ENCODE measurements at regions of chr1 and their contacts with region 1.

Region 1: GRCh38 chr1:2308844-2309243 is 80.7 kb downstream of the SKI start:
- DNase-seq: no peak
- ATAC-seq: no peak
- H3K4me3 ChIP-seq: no peak overlapping the region
- H3K27ac ChIP-seq: no peak overlapping the region
- H3K4me1 ChIP-seq: peaks cover 10% of the 10 kb centered on the region; the same call in 1 of the 2 replicates
- H3K27me3 ChIP-seq: no peaks in the 10 kb centered on the region
- CTCF ChIP-seq: no peak
- EP300 ChIP-seq: no peak
- POLR2A ChIP-seq: no peak
- RAD21 ChIP-seq: no peak

Region 2: DNA sequence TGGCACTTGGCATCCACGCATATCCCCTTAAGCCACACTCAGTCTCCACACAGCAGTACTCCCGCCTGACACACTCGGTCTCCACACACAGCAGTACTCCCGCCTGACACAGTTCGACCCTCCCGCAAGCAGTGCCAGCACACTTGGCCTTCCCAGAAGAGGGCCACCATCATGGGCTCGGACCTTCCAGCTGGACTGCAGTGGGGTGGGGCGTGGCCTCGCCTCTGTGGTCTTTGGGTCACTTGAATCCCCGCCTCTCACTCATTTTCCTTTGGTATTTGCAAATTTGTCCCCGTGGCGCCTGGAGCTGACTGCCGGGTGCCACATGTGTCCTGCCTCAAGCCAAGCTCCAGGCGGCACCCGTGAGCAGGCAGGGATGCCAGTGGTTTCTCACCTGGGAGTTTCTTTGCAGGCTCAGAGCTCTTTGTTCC is 178.0 kb before region 1 on chr1:
- CTCF ChIA-PET with region 1: no interaction called
- POLR2A ChIA-PET with region 1: interaction called, 10 read pairs
- RAD21 ChIA-PET with region 1: no interaction called
- SMC1A ChIA-PET with region 1: no interaction called
- in situ Hi-C with region 1: no loop called
- intact Hi-C with region 1: no loop called
- DNase-seq: no peak
- ATAC-seq: no peak
- H3K4me3 ChIP-seq: no peak overlapping the region
- H3K27ac ChIP-seq: no peak overlapping the region
- H3K4me1 ChIP-seq: peaks cover 11% of the 10 kb centered on the region
- H3K27me3 ChIP-seq: no peaks in the 10 kb centered on the region
- CTCF ChIP-seq: peak in 1 of 3 experiments; percentile 15; a peak in 1 of 6 replicates
- EP300 ChIP-seq: no peak
- POLR2A ChIP-seq: no peak
- RAD21 ChIP-seq: no peak

Region 3: GRCh38 chr1:2275796-2276536 is 32.9 kb before region 1 on chr1:
- CTCF ChIA-PET with region 1: no interaction called
- POLR2A ChIA-PET with region 1: no interaction called
- RAD21 ChIA-PET with region 1: no interaction called
- SMC1A ChIA-PET with region 1: no interaction called
- in situ Hi-C with region 1: no loop called
- intact Hi-C with region 1: no loop called
- DNase-seq: no peak
- ATAC-seq: no peak
- H3K4me3 ChIP-seq: no peak overlapping the region
- H3K27ac ChIP-seq: no peak overlapping the region
- H3K4me1 ChIP-seq: no peaks in the 10 kb centered on the region
- H3K27me3 ChIP-seq: no peaks in the 10 kb centered on the region
- CTCF ChIP-seq: no peak
- EP300 ChIP-seq: no peak
- POLR2A ChIP-seq: no peak
- RAD21 ChIP-seq: no peak